ENCODE measurements at regions of chr1 and their contacts with region 1.

Region 1: GRCh38 chr1:28162151-28162550 is 14.3 kb downstream of the PTAFR start:
- DNase-seq: no peak
- ATAC-seq: no peak
- H3K4me3 Mint-ChIP-seq: no peak overlapping the region
- H3K27ac Mint-ChIP-seq: no peak overlapping the region
- H3K4me1 Mint-ChIP-seq: no peaks in the 10 kb centered on the region
- H3K27me3 Mint-ChIP-seq: no peaks in the 10 kb centered on the region
- CTCF ChIP-seq: no peak

Region 2: DNA sequence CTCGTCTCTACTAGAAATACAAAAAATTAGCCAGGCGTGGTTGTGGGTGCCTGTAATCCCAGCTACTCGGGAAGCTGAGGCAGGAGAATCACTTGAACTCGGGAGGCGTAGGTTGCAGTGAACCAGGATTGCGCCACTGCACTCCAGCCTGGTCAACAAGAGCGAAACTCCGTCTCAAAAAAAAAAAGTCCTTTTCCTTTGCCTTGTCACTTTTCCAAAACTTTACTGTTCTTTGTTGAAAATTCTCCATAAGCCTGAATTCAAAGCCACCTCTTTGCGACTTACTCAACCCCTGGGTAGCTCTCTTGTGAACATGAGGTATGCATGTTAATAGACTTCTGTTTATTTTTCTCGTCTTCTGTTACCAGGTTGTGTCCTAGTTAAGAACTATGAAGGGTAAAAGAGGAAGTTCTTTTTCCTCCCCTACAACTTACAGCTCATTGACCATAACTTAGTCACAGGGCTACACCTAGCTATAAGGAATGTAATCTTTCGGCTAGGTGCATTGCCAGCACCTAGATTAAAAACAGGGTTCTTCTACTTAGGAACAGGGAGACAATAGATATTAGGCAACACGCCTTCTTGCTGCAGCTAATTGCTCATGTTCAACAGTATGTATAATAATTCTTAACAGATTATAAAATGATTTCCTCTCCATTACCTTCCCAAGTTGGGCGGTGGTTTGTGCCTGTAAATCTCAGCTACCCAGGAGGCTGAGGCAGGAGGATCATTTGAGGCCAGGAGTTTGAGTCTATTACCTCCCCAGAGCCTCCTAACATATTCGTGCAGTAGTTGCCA is 26.6 kb before region 1 on chr1:
- CTCF ChIA-PET with region 1: interaction called, 3 read pairs
- POLR2A ChIA-PET with region 1: interaction called, 17 read pairs
- intact Hi-C with region 1: no loop called
- DNase-seq: no peak
- ATAC-seq: peak; percentile 87
- H3K4me3 Mint-ChIP-seq: peak overlapping the region; percentile 66
- H3K27ac Mint-ChIP-seq: peak overlapping the region; percentile 74
- H3K4me1 Mint-ChIP-seq: peaks cover 63% of the 10 kb centered on the region
- H3K27me3 Mint-ChIP-seq: no peaks in the 10 kb centered on the region
- CTCF ChIP-seq: no peak